ENCODE measurements at regions of chr2 and their contacts with region 1.

Region 1: DNA sequence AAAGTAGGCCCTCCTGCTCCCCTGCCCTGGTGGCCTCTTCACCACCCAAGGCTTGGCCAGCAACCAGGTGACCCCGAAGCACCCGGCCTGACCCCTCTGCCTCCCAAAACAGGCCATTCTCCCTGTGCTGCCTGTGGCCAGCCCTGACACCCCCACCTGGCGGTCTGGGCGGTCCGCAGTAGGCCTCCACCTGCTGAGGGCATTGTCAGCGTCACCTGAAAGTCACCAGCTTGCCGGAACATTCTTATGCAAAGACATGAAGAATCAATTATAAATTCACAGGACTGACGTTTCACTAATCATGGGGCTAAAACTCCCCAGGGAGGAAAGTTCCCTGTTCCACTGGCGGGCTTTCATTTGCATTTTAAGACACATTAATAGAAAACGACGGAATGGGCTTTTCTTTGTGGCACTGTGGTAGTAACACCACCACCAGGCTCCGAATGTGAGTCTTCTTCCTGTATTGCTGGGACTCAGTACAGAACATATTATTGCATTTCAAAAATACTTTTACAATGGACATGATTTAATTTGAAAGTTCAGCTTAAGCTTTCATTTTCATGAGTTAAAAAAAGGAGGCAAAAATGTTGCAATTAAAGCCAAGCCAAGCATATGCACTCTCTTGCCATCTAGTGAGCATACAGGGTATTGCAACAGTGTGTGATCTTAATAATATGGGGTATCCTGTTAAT is 57.4 kb downstream of the ADI1 start:
- DNase-seq: peak; percentile 76
- ATAC-seq: peak; percentile 83
- H3K4me3 ChIP-seq: peak overlapping the region in 2 of 5 experiments; percentile 13 to 28
- H3K4me3 Mint-ChIP-seq: peak overlapping the region; percentile 67
- H3K27ac ChIP-seq: peak overlapping the region; percentile 48 to 81
- H3K27ac Mint-ChIP-seq: peak overlapping the region; percentile 93
- H3K4me1 ChIP-seq: peaks cover 6 to 11% of the 10 kb centered on the region in 2 donors
- H3K4me1 Mint-ChIP-seq: peaks cover 16% of the 10 kb centered on the region
- H3K27me3 ChIP-seq: no peaks in the 10 kb centered on the region
- H3K27me3 Mint-ChIP-seq: no peaks in the 10 kb centered on the region
- CTCF ChIP-seq: peak; percentile 99

Region 2: GRCh38 chr2:3242747-3243369 is 219.1 kb before region 1 on chr2:
- CTCF ChIA-PET with region 1: no interaction called
- POLR2A ChIA-PET with region 1: no interaction called
- intact Hi-C with region 1: no loop called
- DNase-seq: peak; percentile 65
- ATAC-seq: peak; percentile 74
- H3K4me3 ChIP-seq: no peak overlapping the region
- H3K4me3 Mint-ChIP-seq: peak overlapping the region; percentile 69
- H3K27ac ChIP-seq: peak overlapping the region in 1 of 2 donors; percentile 62
- H3K27ac Mint-ChIP-seq: peak overlapping the region; percentile 48
- H3K4me1 ChIP-seq: peaks cover 34 to 37% of the 10 kb centered on the region in 2 donors
- H3K4me1 Mint-ChIP-seq: peaks cover 18% of the 10 kb centered on the region
- H3K27me3 ChIP-seq: no peaks in the 10 kb centered on the region
- H3K27me3 Mint-ChIP-seq: no peaks in the 10 kb centered on the region
- CTCF ChIP-seq: no peak

Region 3: GRCh38 chr2:3472966-3473365 is 11.0 kb after region 1 on chr2:
- CTCF ChIA-PET with region 1: interaction called, 11 read pairs
- POLR2A ChIA-PET with region 1: no interaction called
- intact Hi-C with region 1: no loop called
- DNase-seq: no peak
- ATAC-seq: no peak
- H3K4me3 ChIP-seq: no peak overlapping the region
- H3K4me3 Mint-ChIP-seq: no peak overlapping the region
- H3K27ac ChIP-seq: no peak overlapping the region
- H3K27ac Mint-ChIP-seq: no peak overlapping the region
- H3K4me1 ChIP-seq: no peaks in the 10 kb centered on the region
- H3K4me1 Mint-ChIP-seq: no peaks in the 10 kb centered on the region
- H3K27me3 ChIP-seq: no peaks in the 10 kb centered on the region
- H3K27me3 Mint-ChIP-seq: no peaks in the 10 kb centered on the region
- CTCF ChIP-seq: no peak

Region 4: GRCh38 chr2:3667151-3667631 is 205.2 kb after region 1 on chr2:
- CTCF ChIA-PET with region 1: no interaction called
- POLR2A ChIA-PET with region 1: no interaction called
- intact Hi-C with region 1: no loop called
- DNase-seq: no peak
- ATAC-seq: no peak
- H3K4me3 ChIP-seq: no peak overlapping the region
- H3K4me3 Mint-ChIP-seq: no peak overlapping the region
- H3K27ac ChIP-seq: no peak overlapping the region
- H3K27ac Mint-ChIP-seq: no peak overlapping the region
- H3K4me1 ChIP-seq: no peaks in the 10 kb centered on the region
- H3K4me1 Mint-ChIP-seq: no peaks in the 10 kb centered on the region
- H3K27me3 ChIP-seq: no peaks in the 10 kb centered on the region
- H3K27me3 Mint-ChIP-seq: peaks cover 8% of the 10 kb centered on the region
- CTCF ChIP-seq: no peak